Colonic mucosa (tissue), 4 donors: ENCODE measurements at regions of chr3 and their contacts with region 1.

Region 1: GRCh38 chr3:19348929-19349564 is 200.7 kb downstream of the KCNH8 start:
- DNase-seq: peak; percentile 18
- H3K4me3 ChIP-seq: no peak overlapping the region
- H3K27ac ChIP-seq: no peak overlapping the region
- H3K4me1 ChIP-seq: no peaks in the 10 kb centered on the region
- H3K27me3 ChIP-seq: no peaks in the 10 kb centered on the region
- CTCF ChIP-seq: peak; percentile 65

Region 2: DNA sequence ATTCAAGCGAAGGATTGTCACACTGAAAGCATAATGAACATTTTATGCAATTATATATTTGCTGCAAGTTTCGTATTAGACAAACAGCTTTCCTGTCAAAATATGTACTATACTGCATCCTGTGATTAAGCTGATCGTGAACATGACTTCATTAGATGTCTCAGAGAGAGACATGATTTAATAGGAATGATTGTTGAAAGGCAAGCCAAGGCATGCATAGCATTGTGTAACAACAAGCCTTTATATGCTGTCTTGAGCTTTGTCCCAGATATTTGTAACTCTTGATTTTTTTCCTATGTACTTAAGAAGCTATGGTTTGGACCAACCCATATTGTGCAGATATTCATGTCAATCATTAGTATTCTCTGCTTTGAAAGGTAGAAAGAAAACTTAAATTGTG is 108.4 kb after region 1 on chr3:
- intact Hi-C with region 1: no loop called
- DNase-seq: no peak
- H3K4me3 ChIP-seq: no peak overlapping the region
- H3K27ac ChIP-seq: no peak overlapping the region
- H3K4me1 ChIP-seq: no peaks in the 10 kb centered on the region
- H3K27me3 ChIP-seq: no peaks in the 10 kb centered on the region
- CTCF ChIP-seq: no peak

Region 3: GRCh38 chr3:19866751-19867347 is 517.8 kb after region 1 on chr3:
- intact Hi-C with region 1: loop called (anchors 5 kb)
- DNase-seq: peak; percentile 40
- H3K4me3 ChIP-seq: no peak overlapping the region
- H3K27ac ChIP-seq: no peak overlapping the region
- H3K4me1 ChIP-seq: no peaks in the 10 kb centered on the region
- H3K27me3 ChIP-seq: no peaks in the 10 kb centered on the region
- CTCF ChIP-seq: peak; percentile 75